ENCODE measurements at regions of chr19 and their contacts with region 1.

Region 1: GRCh38 chr19:10876459-10877240 is 5.3 kb downstream of the CARM1 start:
- DNase-seq: no peak
- H3K4me3 ChIP-seq: no peak overlapping the region
- H3K27ac ChIP-seq: no peak overlapping the region
- H3K4me1 ChIP-seq: no peaks in the 10 kb centered on the region
- H3K27me3 ChIP-seq: no peaks in the 10 kb centered on the region
- CTCF ChIP-seq: no peak
- POLR2A ChIP-seq: no peak

Region 2: GRCh38 chr19:11018179-11018578 is 141.5 kb after region 1 on chr19:
- intact Hi-C with region 1: loop called (anchors 5 kb)
- DNase-seq: peak; percentile 26
- H3K4me3 ChIP-seq: no peak overlapping the region
- H3K27ac ChIP-seq: peak overlapping the region; percentile 47 to 67
- H3K4me1 ChIP-seq: peaks cover 3% of the 10 kb centered on the region
- H3K27me3 ChIP-seq: no peaks in the 10 kb centered on the region
- CTCF ChIP-seq: no peak
- POLR2A ChIP-seq: no peak